ENCODE measurements at regions of chr1 and their contacts with region 1.

Region 1: GRCh38 chr1:108746372-108747205 is at the start of gene STXBP3:
- DNase-seq: peak; percentile 99
- H3K4me3 ChIP-seq: peak within 1 kb of the TSS; percentile 73
- H3K27ac ChIP-seq: peak within 1 kb of the TSS; percentile 99
- H3K4me1 ChIP-seq: no peaks in the 10 kb centered on the region
- H3K27me3 ChIP-seq: no peaks in the 10 kb centered on the region
- CTCF ChIP-seq: peak; percentile 96
- total RNA-seq, gene STXBP3: 43.5 to 60.4 TPM

Region 2: GRCh38 chr1:108617008-108617723 is 129.4 kb before region 1 on chr1:
- intact Hi-C with region 1: no loop called
- DNase-seq: no peak
- H3K4me3 ChIP-seq: no peak overlapping the region
- H3K27ac ChIP-seq: no peak overlapping the region
- H3K4me1 ChIP-seq: no peaks in the 10 kb centered on the region
- H3K27me3 ChIP-seq: no peaks in the 10 kb centered on the region
- CTCF ChIP-seq: no peak

Region 3: GRCh38 chr1:108695535-108695934 is 51.1 kb before region 1 on chr1:
- intact Hi-C with region 1: loop called (anchors 2 kb)
- DNase-seq: no peak
- H3K4me3 ChIP-seq: no peak overlapping the region
- H3K27ac ChIP-seq: no peak overlapping the region
- H3K4me1 ChIP-seq: no peaks in the 10 kb centered on the region
- H3K27me3 ChIP-seq: no peaks in the 10 kb centered on the region
- CTCF ChIP-seq: no peak

Region 4: DNA sequence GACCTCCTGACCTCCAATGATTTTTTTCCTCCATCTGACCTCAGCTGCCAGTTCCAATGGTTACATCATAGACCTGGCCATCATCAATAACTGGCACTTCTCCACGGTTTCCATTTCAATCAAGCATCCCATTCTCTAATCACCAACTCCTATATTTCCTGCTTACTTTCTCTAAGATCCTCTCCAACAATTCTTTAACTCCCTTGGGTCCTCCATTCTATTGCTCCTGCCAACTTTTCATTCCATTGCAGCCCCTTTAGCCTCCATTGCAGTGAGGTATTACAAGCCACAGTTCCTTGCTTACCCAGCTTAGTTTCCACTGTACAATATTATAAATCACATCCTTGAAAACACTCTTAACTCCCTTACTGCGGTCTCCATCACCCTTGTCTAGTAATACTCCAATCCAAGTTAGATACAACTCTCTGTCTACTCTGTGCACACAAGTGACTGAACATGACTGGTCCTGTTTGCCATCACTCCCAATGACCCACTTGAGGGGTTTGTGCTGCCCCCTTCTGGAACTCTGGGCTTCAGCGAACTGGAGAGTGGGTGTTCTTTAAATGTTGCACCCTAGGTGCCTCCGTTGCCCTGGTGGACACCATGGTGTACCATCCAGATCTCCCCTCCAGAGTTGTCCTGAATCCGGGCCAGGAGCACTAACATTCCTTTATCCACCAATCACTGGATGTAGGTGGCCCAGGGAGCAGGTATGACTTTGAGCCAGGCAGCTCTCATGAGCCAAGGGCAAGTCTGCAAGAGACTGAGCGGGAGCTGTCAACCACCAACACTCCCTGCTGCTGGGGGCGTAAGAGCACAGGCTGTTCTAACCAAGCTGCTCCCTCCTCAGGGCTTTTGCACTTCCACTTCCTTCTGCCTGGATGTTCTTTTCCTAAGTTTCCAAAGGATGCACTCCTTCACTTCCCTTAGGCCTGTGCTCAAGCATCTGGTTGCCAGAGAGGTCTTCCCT is 37.6 kb before region 1 on chr1:
- intact Hi-C with region 1: no loop called
- DNase-seq: peak; percentile 41
- H3K4me3 ChIP-seq: no peak overlapping the region
- H3K27ac ChIP-seq: no peak overlapping the region
- H3K4me1 ChIP-seq: no peaks in the 10 kb centered on the region
- H3K27me3 ChIP-seq: no peaks in the 10 kb centered on the region
- CTCF ChIP-seq: no peak

Measured in colonic mucosa (tissue), 4 donors.